ENCODE measurements at regions of chr10 and their contacts with region 1.

Region 1: DNA sequence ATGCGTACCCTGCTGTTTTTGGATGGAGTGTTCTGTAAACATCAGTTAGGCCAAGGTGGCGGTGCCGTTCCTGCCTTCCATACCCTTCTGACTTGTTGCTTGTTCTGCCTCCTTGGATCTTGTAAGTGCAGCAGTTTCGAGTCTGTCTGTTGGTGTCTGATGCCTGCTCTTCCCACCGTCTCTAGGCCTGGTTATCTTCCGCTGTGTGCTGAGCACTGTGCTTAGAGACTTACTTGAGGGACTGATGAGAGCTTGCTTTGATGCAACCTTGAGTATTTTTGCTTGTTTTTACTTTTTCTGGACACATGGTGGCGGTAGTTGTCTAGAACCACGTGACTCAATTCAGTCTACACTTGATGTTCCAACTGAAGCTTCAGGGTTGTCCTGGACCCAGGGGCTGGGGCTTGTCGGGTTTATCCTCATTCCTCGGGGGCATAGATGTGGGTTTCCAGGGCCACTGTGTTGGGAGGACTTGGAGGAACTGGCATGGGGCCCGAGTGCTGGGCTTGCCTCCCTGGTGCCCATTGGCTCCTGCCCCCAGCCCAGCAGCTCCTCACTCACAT is 14.4 kb upstream of the SPRN start:
- DNase-seq: no peak
- ATAC-seq: 0 out of 2 replicates have a peak, but pooled peaks have one; percentile 43
- H3K4me3 ChIP-seq: no peak overlapping the region
- H3K27ac ChIP-seq: no peak overlapping the region
- H3K4me1 ChIP-seq: no peaks in the 10 kb centered on the region
- H3K27me3 ChIP-seq: no peaks in the 10 kb centered on the region
- CTCF ChIP-seq: 0 out of 2 replicates have a peak, but pooled peaks have one; percentile 30
- POLR2A ChIP-seq: no peak
- RAD21 ChIP-seq: no peak; the same call in 1 of the 2 replicates

Region 2: DNA sequence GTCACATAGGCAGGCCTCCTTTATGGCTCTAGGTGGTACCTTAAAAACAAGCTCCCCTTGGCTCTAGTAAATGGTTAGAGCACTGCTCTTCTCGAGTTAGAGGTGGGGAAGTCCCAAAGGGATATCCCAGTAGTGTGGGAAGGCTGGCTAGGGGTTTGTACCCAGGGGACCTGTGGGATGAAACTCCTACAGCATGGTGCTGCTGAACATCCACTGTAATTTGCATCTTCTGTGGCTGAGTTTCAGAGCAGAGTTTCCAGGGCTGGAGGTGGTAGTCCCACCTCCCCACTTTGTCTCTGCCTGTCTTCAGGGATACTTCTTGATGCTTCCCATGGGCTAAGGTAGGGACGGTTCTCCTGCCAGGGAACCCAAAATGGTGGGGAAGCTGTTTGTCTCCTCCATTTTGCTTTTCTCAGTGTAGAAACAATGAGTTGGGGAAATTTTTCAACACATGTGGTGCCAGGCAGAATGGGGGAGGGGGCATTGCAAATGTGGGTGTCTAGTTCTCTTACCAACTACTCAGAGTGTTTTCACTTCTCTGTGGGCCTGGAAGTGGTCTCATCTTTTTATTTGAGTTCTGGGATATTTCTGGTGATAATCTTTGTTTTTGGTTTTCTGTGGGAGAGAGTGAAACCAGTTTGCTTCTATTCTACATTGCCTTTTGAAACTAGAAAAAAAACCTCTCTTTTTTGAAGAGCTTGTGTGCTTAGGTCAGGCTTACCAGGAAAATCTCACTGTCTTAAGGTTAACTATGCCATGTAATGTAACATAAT is 51.2 kb after region 1 on chr10:
- CTCF ChIA-PET with region 1: no interaction called
- POLR2A ChIA-PET with region 1: no interaction called
- dilution Hi-C with region 1: no loop called
- in situ Hi-C with region 1: no loop called
- intact Hi-C with region 1: loop called (anchors 5 kb)
- DNase-seq: no peak
- ATAC-seq: no peak
- H3K4me3 ChIP-seq: no peak overlapping the region
- H3K27ac ChIP-seq: no peak overlapping the region
- H3K4me1 ChIP-seq: no peaks in the 10 kb centered on the region
- H3K27me3 ChIP-seq: no peaks in the 10 kb centered on the region
- CTCF ChIP-seq: no peak
- POLR2A ChIP-seq: no peak
- RAD21 ChIP-seq: no peak

Region 3: GRCh38 chr10:133520155-133520738 is 81.5 kb after region 1 on chr10:
- CTCF ChIA-PET with region 1: no interaction called
- POLR2A ChIA-PET with region 1: no interaction called
- dilution Hi-C with region 1: no loop called
- in situ Hi-C with region 1: no loop called
- intact Hi-C with region 1: no loop called
- DNase-seq: peak; percentile 30
- ATAC-seq: peak; percentile 98
- H3K4me3 ChIP-seq: peak overlapping the region; percentile 53
- H3K27ac ChIP-seq: peak overlapping the region; percentile 53
- H3K4me1 ChIP-seq: no peaks in the 10 kb centered on the region
- H3K27me3 ChIP-seq: no peaks in the 10 kb centered on the region
- CTCF ChIP-seq: peak; percentile 68
- POLR2A ChIP-seq: no peak
- RAD21 ChIP-seq: peak; percentile 38